PC-3 (cell line): ENCODE measurements at regions of chr9 and their contacts with region 1.

Region 1: GRCh38 chr9:78871452-78872331 is 574.8 kb downstream of the PSAT1 start:
- DNase-seq: peak; percentile 94
- ATAC-seq: peak; percentile 83
- H3K4me3 ChIP-seq: no peak overlapping the region
- H3K27ac ChIP-seq: peak overlapping the region; percentile 94
- H3K4me1 ChIP-seq: peaks cover 34% of the 10 kb centered on the region
- H3K27me3 ChIP-seq: no peaks in the 10 kb centered on the region
- CTCF ChIP-seq: no peak

Region 2: DNA sequence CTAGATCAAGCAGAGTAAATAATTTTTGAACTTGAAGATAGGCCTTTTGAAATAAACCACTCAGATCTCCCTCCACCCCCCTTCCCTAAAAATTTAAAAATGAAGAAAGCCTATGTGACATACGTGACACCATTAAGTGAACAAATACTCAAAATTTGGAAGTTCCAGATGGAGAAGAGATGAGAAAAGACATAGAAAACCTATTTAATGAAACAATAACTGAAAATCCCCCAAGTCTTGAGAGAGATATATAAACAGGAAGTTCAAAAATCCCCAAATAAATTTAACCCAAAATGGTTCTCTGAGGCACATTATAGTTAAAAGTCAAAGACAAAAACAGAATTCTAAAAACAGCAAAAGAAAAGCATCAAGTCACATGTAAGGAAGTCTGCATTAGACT is 146.2 kb before region 1 on chr9:
- CTCF ChIA-PET with region 1: no interaction called
- POLR2A ChIA-PET with region 1: no interaction called
- intact Hi-C with region 1: loop called (anchors 5 kb)
- DNase-seq: no peak
- ATAC-seq: no peak
- H3K4me3 ChIP-seq: no peak overlapping the region
- H3K27ac ChIP-seq: no peak overlapping the region
- H3K4me1 ChIP-seq: peaks cover 9% of the 10 kb centered on the region
- H3K27me3 ChIP-seq: no peaks in the 10 kb centered on the region
- CTCF ChIP-seq: no peak

Region 3: DNA sequence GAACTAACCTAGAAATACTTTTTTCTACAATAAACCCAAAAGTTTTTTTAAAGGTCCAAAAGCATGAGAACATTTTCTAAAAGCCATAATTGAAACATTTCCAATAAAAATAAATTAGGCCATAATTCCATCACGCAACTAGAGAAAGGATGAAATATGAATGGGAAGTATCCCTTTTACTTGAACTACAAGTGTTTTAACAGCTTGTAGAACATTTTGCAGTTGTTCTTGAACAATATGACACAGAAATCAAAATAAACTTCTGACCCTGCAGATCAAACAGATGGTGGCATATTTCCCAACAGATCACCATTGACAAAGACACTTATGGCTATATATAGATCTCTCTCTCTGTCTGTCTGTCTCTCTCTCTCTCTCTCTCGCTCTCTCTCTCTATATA is 49.6 kb after region 1 on chr9:
- CTCF ChIA-PET with region 1: no interaction called
- POLR2A ChIA-PET with region 1: no interaction called
- intact Hi-C with region 1: loop called (anchors 2 kb)
- DNase-seq: no peak
- ATAC-seq: no peak
- H3K4me3 ChIP-seq: no peak overlapping the region
- H3K27ac ChIP-seq: no peak overlapping the region
- H3K4me1 ChIP-seq: peaks cover 51% of the 10 kb centered on the region
- H3K27me3 ChIP-seq: no peaks in the 10 kb centered on the region
- CTCF ChIP-seq: no peak

Region 4: GRCh38 chr9:78973889-78974288 is 102.2 kb after region 1 on chr9:
- CTCF ChIA-PET with region 1: no interaction called
- POLR2A ChIA-PET with region 1: no interaction called
- intact Hi-C with region 1: loop called (anchors 5 kb)
- DNase-seq: peak; percentile 91
- ATAC-seq: peak; percentile 80
- H3K4me3 ChIP-seq: no peak overlapping the region
- H3K27ac ChIP-seq: peak overlapping the region; percentile 46
- H3K4me1 ChIP-seq: peaks cover 12% of the 10 kb centered on the region
- H3K27me3 ChIP-seq: no peaks in the 10 kb centered on the region
- CTCF ChIP-seq: no peak

Region 5: GRCh38 chr9:79329861-79330260 is 458.2 kb after region 1 on chr9:
- CTCF ChIA-PET with region 1: no interaction called
- POLR2A ChIA-PET with region 1: no interaction called
- intact Hi-C with region 1: no loop called
- DNase-seq: no peak
- ATAC-seq: no peak
- H3K4me3 ChIP-seq: no peak overlapping the region
- H3K27ac ChIP-seq: no peak overlapping the region
- H3K4me1 ChIP-seq: no peaks in the 10 kb centered on the region
- H3K27me3 ChIP-seq: no peaks in the 10 kb centered on the region
- CTCF ChIP-seq: no peak